ENCODE measurements at regions of chr17 and their contacts with region 1.

Region 1: DNA sequence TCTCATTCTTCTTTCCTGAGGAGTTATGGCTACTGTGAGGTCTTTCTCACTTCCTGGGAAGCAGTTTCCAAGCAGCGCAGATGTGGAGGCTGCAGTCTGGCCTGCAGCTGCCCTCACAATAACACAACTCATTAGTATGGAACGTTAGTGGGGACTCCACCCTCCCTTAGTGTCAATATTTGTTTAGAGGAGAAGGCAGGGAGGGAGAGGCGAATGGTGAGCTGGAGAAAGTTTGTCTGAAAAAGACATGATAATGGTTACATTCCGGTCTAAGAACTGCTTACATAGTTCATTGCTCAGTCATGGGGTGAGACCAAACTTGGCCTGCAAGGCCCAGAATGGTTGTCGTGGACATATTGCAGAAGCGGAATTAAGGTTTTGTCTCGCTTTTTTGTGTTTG is 170.2 kb downstream of the HS3ST3B1 start:
- DNase-seq: peak; percentile 94
- ATAC-seq: peak; percentile 97
- H3K4me3 ChIP-seq: no peak overlapping the region
- H3K27ac ChIP-seq: peak overlapping the region; percentile 81; the same call in 1 of the 2 replicates
- H3K4me1 ChIP-seq: peaks cover 10% of the 10 kb centered on the region
- H3K27me3 ChIP-seq: no peaks in the 10 kb centered on the region
- CTCF ChIP-seq: no peak
- POLR2A ChIP-seq: no peak
- RAD21 ChIP-seq: no peak

Region 2: GRCh38 chr17:13346996-13347765 is 1123.9 kb before region 1 on chr17:
- CTCF ChIA-PET with region 1: no interaction called
- POLR2A ChIA-PET with region 1: no interaction called
- dilution Hi-C with region 1: no loop called
- in situ Hi-C with region 1: no loop called
- intact Hi-C with region 1: loop called (anchors 10 kb)
- DNase-seq: peak; percentile 98
- ATAC-seq: peak; percentile 55
- H3K4me3 ChIP-seq: no peak overlapping the region
- H3K27ac ChIP-seq: peak overlapping the region; percentile 50
- H3K4me1 ChIP-seq: peaks cover 17% of the 10 kb centered on the region
- H3K27me3 ChIP-seq: no peaks in the 10 kb centered on the region
- CTCF ChIP-seq: no peak
- POLR2A ChIP-seq: peak; percentile 51; the same call in 1 of the 2 replicates
- RAD21 ChIP-seq: no peak

Region 3: DNA sequence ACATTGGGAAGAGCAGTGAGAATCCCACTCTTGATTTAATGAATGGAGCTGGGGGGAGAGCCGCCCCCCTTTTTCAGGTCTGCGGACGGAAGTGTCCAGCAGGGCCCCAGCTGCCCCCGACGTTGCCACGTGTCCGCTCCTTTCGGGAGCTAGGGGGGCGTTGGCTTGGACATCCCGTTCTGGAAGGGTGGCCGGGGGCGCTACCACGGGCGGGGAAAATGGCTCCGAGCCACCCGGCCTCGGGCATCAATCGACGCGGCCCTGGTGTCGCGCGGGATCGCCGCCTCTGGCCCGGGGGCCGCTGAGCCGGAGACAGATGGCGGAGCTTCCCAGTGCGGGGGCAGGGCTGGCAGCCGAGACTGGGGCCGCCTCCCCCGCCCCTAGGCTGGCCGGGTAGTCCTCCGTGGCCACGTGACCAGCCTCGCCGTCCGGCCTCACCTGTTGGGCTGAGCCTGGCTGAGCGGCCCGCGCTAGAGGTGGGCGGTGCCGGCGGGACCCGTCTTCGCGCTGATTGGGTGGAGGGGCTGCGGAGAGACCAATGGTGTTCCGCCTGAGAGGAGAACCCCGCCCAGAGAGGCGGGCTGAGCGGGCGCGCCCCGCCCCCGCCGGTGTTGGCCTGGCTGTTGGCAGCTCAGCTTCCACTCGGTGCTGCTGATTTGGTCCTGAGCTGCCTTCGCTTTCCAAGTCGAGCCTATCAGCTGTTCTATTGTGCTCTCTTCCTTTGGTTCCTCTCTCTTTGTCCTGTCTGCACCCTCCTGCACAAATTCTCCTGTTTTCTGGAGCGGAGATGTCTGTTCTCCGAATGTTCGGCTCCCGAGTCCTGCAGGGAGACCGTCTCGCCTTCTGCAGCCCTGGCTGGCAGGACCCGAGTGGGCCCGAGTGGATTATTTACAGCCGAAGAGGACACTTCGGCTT is 161.8 kb before region 1 on chr17:
- CTCF ChIA-PET with region 1: no interaction called
- POLR2A ChIA-PET with region 1: no interaction called
- dilution Hi-C with region 1: no loop called
- in situ Hi-C with region 1: no loop called
- intact Hi-C with region 1: loop called (anchors 5 kb)
- DNase-seq: peak; percentile 89
- ATAC-seq: peak; percentile 98
- H3K4me3 ChIP-seq: peak overlapping the region; percentile 40
- H3K27ac ChIP-seq: peak overlapping the region; percentile 51
- H3K4me1 ChIP-seq: peaks cover 12% of the 10 kb centered on the region
- H3K27me3 ChIP-seq: no peaks in the 10 kb centered on the region
- CTCF ChIP-seq: no peak
- POLR2A ChIP-seq: no peak
- RAD21 ChIP-seq: no peak

Region 4: DNA sequence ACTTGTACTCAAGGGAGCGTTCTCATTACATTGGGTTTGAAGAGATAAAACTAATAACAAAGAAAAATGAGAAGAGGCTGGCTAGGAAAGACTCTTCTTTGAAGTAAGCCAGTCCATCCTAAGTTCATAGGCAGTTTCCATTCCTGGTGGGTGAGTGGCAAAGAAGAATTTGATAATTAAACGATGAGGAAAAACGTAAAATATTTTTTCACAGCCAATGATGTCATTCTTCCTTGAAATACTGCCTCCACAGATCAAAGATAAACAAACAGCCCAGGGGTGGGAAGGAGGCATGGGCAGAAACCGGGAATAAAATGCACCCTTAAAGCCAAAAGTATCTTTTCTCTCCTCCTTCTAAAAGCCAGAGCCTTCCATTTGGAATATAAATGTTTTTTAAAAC is 447.5 kb after region 1 on chr17:
- CTCF ChIA-PET with region 1: no interaction called
- POLR2A ChIA-PET with region 1: no interaction called
- dilution Hi-C with region 1: no loop called
- in situ Hi-C with region 1: no loop called
- intact Hi-C with region 1: loop called (anchors 2 kb)
- DNase-seq: peak; percentile 72
- ATAC-seq: peak; percentile 87
- H3K4me3 ChIP-seq: no peak overlapping the region
- H3K27ac ChIP-seq: no peak overlapping the region
- H3K4me1 ChIP-seq: peaks cover 6% of the 10 kb centered on the region
- H3K27me3 ChIP-seq: no peaks in the 10 kb centered on the region
- CTCF ChIP-seq: no peak
- POLR2A ChIP-seq: no peak
- RAD21 ChIP-seq: no peak

Region 5: DNA sequence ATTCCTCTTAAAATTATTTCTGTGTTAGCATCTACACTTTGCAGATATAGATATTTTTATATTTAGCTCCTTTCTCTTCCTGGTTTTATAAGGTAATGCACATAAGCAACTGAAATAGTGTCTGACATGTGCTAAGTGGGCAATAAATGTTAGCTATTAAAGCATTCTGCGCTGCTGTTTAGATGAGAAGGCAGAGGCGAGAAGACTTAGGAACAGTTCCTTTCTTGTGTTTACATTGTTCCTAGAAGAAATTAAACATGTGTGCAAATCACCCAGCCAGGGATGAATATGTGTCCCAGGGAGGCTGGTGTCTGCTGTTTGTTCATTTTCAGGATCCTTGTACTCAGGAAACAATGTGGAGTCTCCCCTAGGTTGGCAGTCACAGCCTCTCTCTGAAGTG is 501.8 kb after region 1 on chr17:
- CTCF ChIA-PET with region 1: no interaction called
- POLR2A ChIA-PET with region 1: no interaction called
- dilution Hi-C with region 1: no loop called
- in situ Hi-C with region 1: no loop called
- intact Hi-C with region 1: no loop called
- DNase-seq: no peak
- ATAC-seq: no peak
- H3K4me3 ChIP-seq: no peak overlapping the region
- H3K27ac ChIP-seq: no peak overlapping the region
- H3K4me1 ChIP-seq: no peaks in the 10 kb centered on the region
- H3K27me3 ChIP-seq: peaks cover 5% of the 10 kb centered on the region; the same call in 1 of the 2 replicates
- CTCF ChIP-seq: no peak
- POLR2A ChIP-seq: no peak
- RAD21 ChIP-seq: no peak

Measured in IMR-90 (cell line).